Breast epithelium (tissue), 4 donors: ENCODE measurements at regions of chr2 and their contacts with region 1.

Region 1: GRCh38 chr2:188076149-188077056 is 215.3 kb upstream of the GULP1 start:
- DNase-seq: no peak
- H3K4me3 ChIP-seq: no peak overlapping the region
- H3K27ac ChIP-seq: no peak overlapping the region
- H3K4me1 ChIP-seq: no peaks in the 10 kb centered on the region
- H3K27me3 ChIP-seq: no peaks in the 10 kb centered on the region
- CTCF ChIP-seq: no peak
- POLR2A ChIP-seq: no peak

Region 2: GRCh38 chr2:188089901-188090300 is 13.5 kb after region 1 on chr2:
- intact Hi-C with region 1: no loop called
- DNase-seq: no peak
- H3K4me3 ChIP-seq: no peak overlapping the region
- H3K27ac ChIP-seq: no peak overlapping the region
- H3K4me1 ChIP-seq: no peaks in the 10 kb centered on the region
- H3K27me3 ChIP-seq: no peaks in the 10 kb centered on the region
- CTCF ChIP-seq: no peak
- POLR2A ChIP-seq: no peak

Region 3: DNA sequence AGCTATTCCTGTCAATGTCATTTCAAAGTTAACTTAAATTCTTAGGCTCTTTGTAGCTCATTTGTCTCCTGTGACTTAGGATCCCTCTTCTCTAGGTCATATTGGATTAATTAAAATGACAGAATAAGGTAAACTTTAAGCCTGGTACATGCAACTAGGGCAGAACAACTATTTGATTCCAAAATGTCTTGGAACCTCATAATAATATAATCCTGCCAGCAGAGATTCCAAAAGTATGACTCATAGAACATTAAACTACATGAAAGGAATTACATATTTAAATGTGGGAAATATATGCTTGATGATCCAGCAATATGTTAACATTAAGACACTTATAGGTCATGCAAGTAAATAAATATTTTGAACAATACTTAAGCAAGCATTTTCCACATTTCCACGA is 961.1 kb after region 1 on chr2:
- intact Hi-C with region 1: loop called (anchors 5 kb)
- DNase-seq: no peak
- H3K4me3 ChIP-seq: no peak overlapping the region
- H3K27ac ChIP-seq: no peak overlapping the region
- H3K4me1 ChIP-seq: no peaks in the 10 kb centered on the region
- H3K27me3 ChIP-seq: no peaks in the 10 kb centered on the region
- CTCF ChIP-seq: no peak
- POLR2A ChIP-seq: no peak